Common myeloid progenitor, CD34-positive (primary cell): ENCODE measurements at regions of chr9 and their contacts with region 1.

Region 1: DNA sequence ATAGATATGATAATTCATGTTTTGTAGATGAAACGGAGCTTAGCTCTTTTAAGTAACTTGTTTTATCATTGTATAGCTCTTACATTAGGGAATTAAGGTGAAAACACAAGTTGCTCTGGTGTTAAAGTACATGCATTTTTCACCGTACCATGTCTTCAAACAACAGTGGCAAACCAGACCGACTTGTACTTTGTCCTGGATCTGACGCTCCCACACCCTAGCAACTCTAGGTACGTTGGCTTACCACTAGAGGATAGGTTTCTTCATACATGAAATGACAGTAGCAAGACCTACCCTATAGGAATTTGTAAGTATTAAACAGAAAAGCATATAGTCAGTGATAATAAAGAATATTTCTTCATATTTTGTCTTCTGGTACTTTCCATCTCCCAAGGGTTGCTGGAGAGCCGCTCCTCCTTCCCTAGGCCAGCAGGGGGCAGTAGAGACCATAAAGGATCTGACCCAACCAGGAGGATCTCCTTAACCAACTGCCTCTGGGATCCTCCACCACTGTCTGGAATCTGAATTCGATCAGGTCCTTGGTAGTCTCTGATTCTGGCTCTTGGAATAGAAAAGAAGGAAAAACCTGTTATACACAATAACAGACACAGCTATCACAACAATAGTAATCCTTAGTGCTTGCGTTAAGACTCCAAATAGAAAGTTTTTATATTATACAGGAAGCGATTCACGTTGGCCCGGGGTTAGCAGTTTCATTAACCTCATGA is 136.7 kb downstream of the CAVIN4 start:
- DNase-seq: peak; percentile 22 to 55 (median 41)
- H3K4me3 ChIP-seq: no peak overlapping the region
- H3K27ac ChIP-seq: no peak overlapping the region
- H3K4me1 ChIP-seq: no peaks in the 10 kb centered on the region
- H3K27me3 ChIP-seq: peaks cover 0 to 4% (median 0%) of the 10 kb centered on the region in 5 experiments

Region 2: GRCh38 chr9:101311758-101312420 is 597.4 kb after region 1 on chr9:
- CTCF ChIA-PET with region 1: interaction called, 11 read pairs
- POLR2A ChIA-PET with region 1: no interaction called
- DNase-seq: peak; percentile 78 to 93 (median 88)
- H3K4me3 ChIP-seq: no peak overlapping the region
- H3K27ac ChIP-seq: no peak overlapping the region
- H3K4me1 ChIP-seq: peaks cover 0 to 4% (median 2%) of the 10 kb centered on the region in 4 experiments
- H3K27me3 ChIP-seq: peaks cover 0 to 53% (median 22%) of the 10 kb centered on the region in 5 experiments